Activated CD4-positive, alpha-beta T cell treated with anti-CD3 and anti-CD28 coated beads, Interleukin-2, amount 10 ng/mL, durations not matched to agents 7 days and 5 days (primary cell): ENCODE measurements at regions of chr9 and their contacts with region 1.

Region 1: DNA sequence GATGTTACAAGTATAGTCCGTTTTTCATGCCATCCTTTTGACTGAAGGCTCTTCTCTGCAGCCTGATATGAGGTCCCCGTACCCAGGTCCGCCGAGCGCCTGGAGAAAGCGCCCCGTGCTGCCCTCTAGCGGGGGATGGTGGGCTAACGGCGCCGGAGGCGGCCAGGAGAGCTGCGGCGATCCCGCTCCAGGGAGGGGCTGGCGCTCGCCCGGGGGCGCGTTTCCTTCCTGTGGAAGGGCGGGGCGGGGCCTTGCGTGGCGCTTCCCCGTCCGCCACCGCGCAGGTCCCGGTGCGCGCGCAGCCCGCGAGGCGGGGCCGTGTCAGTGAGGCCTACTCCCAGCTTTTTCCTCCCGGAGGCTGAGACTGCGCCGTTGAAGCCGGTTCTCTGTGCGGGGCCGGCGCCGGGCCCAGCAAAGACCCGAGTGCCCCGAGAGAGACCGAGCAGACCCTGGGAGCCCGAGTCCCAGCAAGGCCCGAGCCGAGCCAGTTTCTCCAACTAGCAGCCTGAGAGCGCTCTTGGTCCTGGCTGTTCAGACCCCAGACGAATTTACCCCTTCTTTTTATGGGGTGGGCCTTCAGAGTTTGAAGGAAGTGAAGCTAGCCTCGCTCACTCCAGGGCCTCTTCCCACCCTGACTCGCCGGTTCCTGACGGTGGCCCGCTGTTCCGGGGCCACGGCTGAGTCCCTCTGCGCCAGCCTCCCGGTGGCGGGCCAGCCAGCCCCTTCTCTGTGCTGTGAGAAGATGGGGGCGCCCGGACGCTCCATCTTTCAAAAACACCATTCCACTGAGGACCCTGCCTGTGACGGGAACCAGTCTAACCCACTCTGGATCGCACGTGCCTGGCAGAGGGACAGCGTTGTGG is 9.7 kb upstream of the PHF2 start:
- DNase-seq: peak; percentile 97
- H3K4me3 Mint-ChIP-seq: peak overlapping the region; percentile 80
- H3K27ac Mint-ChIP-seq: peak overlapping the region; percentile 91
- H3K4me1 Mint-ChIP-seq: peaks cover 24% of the 10 kb centered on the region
- H3K27me3 Mint-ChIP-seq: no peaks in the 10 kb centered on the region

Region 2: DNA sequence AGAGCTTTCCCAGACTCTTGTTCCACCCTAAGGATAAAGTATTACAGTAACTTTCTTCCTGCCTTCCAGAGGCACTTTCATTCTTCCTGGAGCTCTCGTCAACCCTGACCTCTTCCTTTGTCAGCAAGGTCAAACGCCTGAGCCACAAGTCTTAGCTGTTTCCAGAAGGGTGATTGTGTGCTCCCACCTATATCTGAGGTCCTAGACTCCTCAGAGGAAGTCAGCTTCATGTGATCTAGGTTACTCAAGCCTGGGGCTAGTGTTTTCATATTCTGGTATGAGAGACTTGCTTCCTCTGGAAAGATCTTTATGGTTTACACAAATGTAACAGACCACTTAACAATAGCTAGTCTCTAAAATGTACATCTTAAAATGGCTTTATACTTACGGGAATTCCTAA is 120.6 kb before region 1 on chr9:
- CTCF ChIA-PET with region 1: interaction called, 10 read pairs
- POLR2A ChIA-PET with region 1: no interaction called
- DNase-seq: no peak
- H3K4me3 Mint-ChIP-seq: no peak overlapping the region
- H3K27ac Mint-ChIP-seq: no peak overlapping the region
- H3K4me1 Mint-ChIP-seq: peaks cover 29% of the 10 kb centered on the region
- H3K27me3 Mint-ChIP-seq: no peaks in the 10 kb centered on the region

Region 3: GRCh38 chr9:93453047-93453914 is 113.4 kb before region 1 on chr9 and contains the start of gene FAM120AOS:
- CTCF ChIA-PET with region 1: interaction called, 26 read pairs
- POLR2A ChIA-PET with region 1: interaction called, 3 read pairs
- DNase-seq: peak; percentile 88
- H3K4me3 Mint-ChIP-seq: peak within 1 kb of the TSS; percentile 93
- H3K27ac Mint-ChIP-seq: peak within 1 kb of the TSS; percentile 95
- H3K4me1 Mint-ChIP-seq: peaks cover 52% of the 10 kb centered on the region
- H3K27me3 Mint-ChIP-seq: no peaks in the 10 kb centered on the region
- total RNA-seq, gene FAM120AOS: 34.9 to 35.4 TPM

Region 4: GRCh38 chr9:93480728-93481324 is 85.8 kb before region 1 on chr9:
- CTCF ChIA-PET with region 1: no interaction called
- POLR2A ChIA-PET with region 1: no interaction called
- DNase-seq: no peak
- H3K4me3 Mint-ChIP-seq: no peak overlapping the region
- H3K27ac Mint-ChIP-seq: peak overlapping the region; percentile 78
- H3K4me1 Mint-ChIP-seq: peaks cover 25% of the 10 kb centered on the region
- H3K27me3 Mint-ChIP-seq: no peaks in the 10 kb centered on the region

Region 5: GRCh38 chr9:93549611-93550010 is 17.0 kb before region 1 on chr9:
- CTCF ChIA-PET with region 1: interaction called, 16 read pairs
- POLR2A ChIA-PET with region 1: no interaction called
- DNase-seq: no peak
- H3K4me3 Mint-ChIP-seq: no peak overlapping the region
- H3K27ac Mint-ChIP-seq: no peak overlapping the region
- H3K4me1 Mint-ChIP-seq: no peaks in the 10 kb centered on the region
- H3K27me3 Mint-ChIP-seq: no peaks in the 10 kb centered on the region

Region 6: GRCh38 chr9:93612796-93613154 is 46.1 kb after region 1 on chr9:
- CTCF ChIA-PET with region 1: no interaction called
- POLR2A ChIA-PET with region 1: no interaction called
- DNase-seq: no peak
- H3K4me3 Mint-ChIP-seq: no peak overlapping the region
- H3K27ac Mint-ChIP-seq: no peak overlapping the region
- H3K4me1 Mint-ChIP-seq: peaks cover 16% of the 10 kb centered on the region
- H3K27me3 Mint-ChIP-seq: no peaks in the 10 kb centered on the region

Region 7: GRCh38 chr9:93721417-93721965 is 154.9 kb after region 1 on chr9:
- CTCF ChIA-PET with region 1: no interaction called
- POLR2A ChIA-PET with region 1: no interaction called
- DNase-seq: no peak
- H3K4me3 Mint-ChIP-seq: no peak overlapping the region
- H3K27ac Mint-ChIP-seq: no peak overlapping the region
- H3K4me1 Mint-ChIP-seq: peaks cover 2% of the 10 kb centered on the region
- H3K27me3 Mint-ChIP-seq: no peaks in the 10 kb centered on the region